CD14-positive monocyte (primary cell): ENCODE measurements at regions of chr5 and their contacts with region 1.

Region 1: GRCh38 chr5:91101600-91102379 is 281.3 kb downstream of the ARRDC3 start:
- DNase-seq: peak; percentile 73 to 94 (median 85)
- H3K4me3 ChIP-seq: no peak overlapping the region
- H3K4me3 Mint-ChIP-seq: no peak overlapping the region
- H3K27ac ChIP-seq: no peak overlapping the region
- H3K27ac Mint-ChIP-seq: peak overlapping the region in 4 of 7 donors; percentile 53 to 80 (median 72)
- H3K4me1 ChIP-seq: peaks cover 17 to 24% of the 10 kb centered on the region in 2 donors
- H3K4me1 Mint-ChIP-seq: peaks cover 22% of the 10 kb centered on the region
- H3K27me3 ChIP-seq: no peaks in the 10 kb centered on the region
- H3K27me3 Mint-ChIP-seq: peaks cover 0 to 2% (median 2%) of the 10 kb centered on the region in 3 donors
- CTCF ChIP-seq: peak; percentile 84

Region 2: DNA sequence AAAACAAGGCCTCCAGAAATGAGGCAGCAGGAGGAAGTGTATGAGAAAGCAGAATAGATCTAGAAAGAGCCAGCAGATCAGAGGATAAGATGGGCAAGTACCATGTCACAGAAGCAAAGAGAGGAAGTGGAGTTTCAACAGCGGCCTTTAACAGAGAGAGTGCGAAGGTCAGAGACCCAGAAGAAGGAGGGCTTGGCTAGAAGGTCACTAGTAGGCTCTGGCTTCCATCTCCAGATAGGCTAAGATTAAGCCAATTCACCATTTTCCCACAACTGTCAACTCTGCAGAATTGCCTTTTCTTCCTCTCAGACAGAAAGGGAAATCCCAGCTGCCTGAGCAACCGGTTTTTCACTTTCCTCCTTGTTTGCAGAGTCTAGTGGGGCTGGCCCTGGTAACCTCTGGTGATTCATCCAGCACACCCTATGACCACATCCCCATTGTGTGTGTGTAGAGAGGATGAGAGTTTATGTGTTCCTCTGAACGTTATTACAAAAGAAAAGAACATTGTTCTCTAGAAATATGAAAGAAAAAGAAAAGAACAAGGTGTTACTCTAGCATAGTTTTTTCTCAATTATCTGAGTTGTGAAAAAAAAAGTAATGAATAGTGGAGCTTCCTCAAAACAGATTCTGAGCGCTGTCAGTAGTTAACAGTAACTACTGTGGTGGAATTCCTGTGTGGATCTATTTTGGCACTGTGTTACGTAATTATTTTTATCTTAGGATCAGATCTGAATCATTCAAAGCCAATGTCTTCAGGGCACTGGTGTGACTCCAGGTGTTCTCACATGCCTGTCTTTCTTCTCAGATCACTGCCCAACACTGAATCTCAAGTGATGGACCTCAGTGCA is 61.0 kb after region 1 on chr5:
- intact Hi-C with region 1: loop called in 1 of 2 experiments (anchors 5 kb)
- DNase-seq: peak; percentile 96 to 99 (median 99)
- H3K4me3 ChIP-seq: peak overlapping the region in 1 of 3 experiments; percentile 54
- H3K4me3 Mint-ChIP-seq: peak overlapping the region in 1 of 2 donors; percentile 75
- H3K27ac ChIP-seq: peak overlapping the region; percentile 91 to 95
- H3K27ac Mint-ChIP-seq: peak overlapping the region; percentile 97 to 100 (median 99)
- H3K4me1 ChIP-seq: peaks cover 29 to 35% of the 10 kb centered on the region in 2 donors
- H3K4me1 Mint-ChIP-seq: peaks cover 32% of the 10 kb centered on the region
- H3K27me3 ChIP-seq: no peaks in the 10 kb centered on the region
- H3K27me3 Mint-ChIP-seq: peaks cover 0 to 4% (median 0%) of the 10 kb centered on the region in 3 donors
- CTCF ChIP-seq: no peak

Region 3: GRCh38 chr5:91219803-91220371 is 118.1 kb after region 1 on chr5:
- intact Hi-C with region 1: loop called in 1 of 2 experiments (anchors 10 kb)
- DNase-seq: peak in 1 of 3 donors; percentile 27
- H3K4me3 ChIP-seq: peak overlapping the region in 1 of 3 experiments; percentile 9
- H3K4me3 Mint-ChIP-seq: no peak overlapping the region
- H3K27ac ChIP-seq: peak overlapping the region in 1 of 2 donors; percentile 91
- H3K27ac Mint-ChIP-seq: peak overlapping the region; percentile 86 to 96 (median 92)
- H3K4me1 ChIP-seq: peaks cover 21 to 30% of the 10 kb centered on the region in 2 donors
- H3K4me1 Mint-ChIP-seq: peaks cover 30% of the 10 kb centered on the region
- H3K27me3 ChIP-seq: no peaks in the 10 kb centered on the region
- H3K27me3 Mint-ChIP-seq: peaks cover 0 to 2% (median 0%) of the 10 kb centered on the region in 3 donors
- CTCF ChIP-seq: no peak

Region 4: DNA sequence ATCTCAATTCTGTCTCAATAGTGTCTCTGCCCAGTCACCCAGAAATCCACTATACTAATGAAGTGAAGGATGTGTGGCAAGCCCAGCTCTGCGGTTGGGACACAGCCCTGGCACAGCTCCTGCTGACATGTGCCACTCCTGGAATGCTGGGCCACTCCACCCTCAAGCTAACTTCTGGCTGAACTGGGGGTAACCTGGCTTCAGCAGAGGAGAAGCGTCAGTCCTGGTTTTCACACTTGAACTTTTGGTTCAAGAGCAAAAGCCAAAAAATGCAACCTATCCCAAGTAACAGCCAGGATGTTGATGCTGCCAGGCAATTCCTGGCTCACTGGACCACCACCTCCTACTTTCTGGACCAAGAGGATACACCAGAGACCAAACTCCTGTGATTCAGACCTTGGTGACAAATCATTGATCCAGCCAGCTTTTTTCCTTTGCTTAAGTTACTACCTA is 194.9 kb after region 1 on chr5:
- intact Hi-C with region 1: loop called in 1 of 2 experiments (anchors 5 kb)
- DNase-seq: peak in 1 of 3 donors; percentile 40
- H3K4me3 ChIP-seq: no peak overlapping the region
- H3K4me3 Mint-ChIP-seq: no peak overlapping the region
- H3K27ac ChIP-seq: no peak overlapping the region
- H3K27ac Mint-ChIP-seq: peak overlapping the region in 3 of 7 donors; percentile 3 to 80 (median 20)
- H3K4me1 ChIP-seq: peaks cover 22 to 30% of the 10 kb centered on the region in 2 donors
- H3K4me1 Mint-ChIP-seq: peaks cover 32% of the 10 kb centered on the region
- H3K27me3 ChIP-seq: no peaks in the 10 kb centered on the region
- H3K27me3 Mint-ChIP-seq: peaks cover 0 to 3% (median 0%) of the 10 kb centered on the region in 3 donors
- CTCF ChIP-seq: no peak

Region 5: DNA sequence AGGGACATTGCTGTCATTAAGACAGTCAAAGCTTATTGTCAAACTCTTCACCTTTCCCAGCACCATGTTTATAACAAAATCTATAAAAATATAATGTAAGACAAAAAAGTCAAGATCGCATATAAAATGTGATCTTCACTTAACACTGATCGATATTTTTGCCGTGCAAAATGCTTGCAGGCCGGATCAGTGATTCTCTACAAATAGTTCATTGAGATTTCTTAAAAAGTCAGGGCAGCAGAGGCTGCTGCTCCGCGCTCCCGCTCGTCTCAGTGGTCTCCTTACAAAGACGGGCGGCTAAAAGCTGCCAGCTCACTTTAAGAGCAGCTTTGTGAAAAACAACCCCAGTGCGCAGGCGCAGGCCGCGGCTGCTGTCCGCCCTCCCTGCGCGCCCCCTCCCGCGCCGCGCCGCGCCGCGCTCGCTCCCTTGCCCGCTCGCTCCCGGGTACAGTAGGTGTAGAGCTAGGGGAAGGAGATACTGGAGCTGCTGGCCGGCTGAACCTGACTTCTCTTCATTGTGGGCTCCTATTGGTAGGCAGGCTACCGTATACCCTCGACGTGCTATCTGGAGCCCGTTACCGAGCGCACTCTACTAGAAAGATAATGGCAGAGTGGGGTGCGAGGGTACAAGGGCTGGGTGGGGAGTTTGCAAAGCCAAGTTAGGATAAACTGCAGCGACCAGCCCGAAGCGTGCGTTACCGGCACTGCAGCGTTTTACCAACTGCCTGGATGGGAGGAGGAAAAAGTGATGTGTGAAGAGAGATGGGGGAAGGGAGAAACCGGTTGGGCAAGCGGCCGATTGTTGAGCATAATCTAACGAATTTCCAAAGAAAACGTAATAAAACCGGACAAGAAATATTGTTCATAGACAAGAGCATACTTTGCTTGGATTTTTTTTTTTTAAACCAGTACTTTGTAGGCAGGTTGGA is 281.5 kb after region 1 on chr5 and contains the start of gene ARRDC3:
- intact Hi-C with region 1: loop called (anchors 2 to 5 kb)
- DNase-seq: peak; percentile 92 to 96 (median 93)
- H3K4me3 ChIP-seq: peak within 1 kb of the TSS; percentile 88 to 100 (median 98)
- H3K4me3 Mint-ChIP-seq: peak within 1 kb of the TSS; percentile 97 to 98
- H3K27ac ChIP-seq: peak within 1 kb of the TSS; percentile 99 to 100
- H3K27ac Mint-ChIP-seq: peak within 1 kb of the TSS; percentile 88 to 99 (median 97)
- H3K4me1 ChIP-seq: peaks cover 20 to 25% of the 10 kb centered on the region in 2 donors
- H3K4me1 Mint-ChIP-seq: peaks cover 15% of the 10 kb centered on the region
- H3K27me3 ChIP-seq: no peaks in the 10 kb centered on the region
- H3K27me3 Mint-ChIP-seq: no peaks in the 10 kb centered on the region
- CTCF ChIP-seq: no peak
- polyA plus RNA-seq, gene ARRDC3: 43.3 to 68.0 (median 64.6) TPM

Region 6: GRCh38 chr5:91419571-91420537 is 318.1 kb after region 1 on chr5:
- intact Hi-C with region 1: loop called in 1 of 2 experiments (anchors 5 kb)
- DNase-seq: peak; percentile 55 to 74 (median 61)
- H3K4me3 ChIP-seq: no peak overlapping the region
- H3K4me3 Mint-ChIP-seq: no peak overlapping the region
- H3K27ac ChIP-seq: no peak overlapping the region
- H3K27ac Mint-ChIP-seq: no peak overlapping the region
- H3K4me1 ChIP-seq: peaks cover 0 to 5% of the 10 kb centered on the region in 2 donors
- H3K4me1 Mint-ChIP-seq: peaks cover 6% of the 10 kb centered on the region
- H3K27me3 ChIP-seq: no peaks in the 10 kb centered on the region
- H3K27me3 Mint-ChIP-seq: peaks cover 0 to 3% (median 1%) of the 10 kb centered on the region in 3 donors
- CTCF ChIP-seq: peak; percentile 79

Region 7: DNA sequence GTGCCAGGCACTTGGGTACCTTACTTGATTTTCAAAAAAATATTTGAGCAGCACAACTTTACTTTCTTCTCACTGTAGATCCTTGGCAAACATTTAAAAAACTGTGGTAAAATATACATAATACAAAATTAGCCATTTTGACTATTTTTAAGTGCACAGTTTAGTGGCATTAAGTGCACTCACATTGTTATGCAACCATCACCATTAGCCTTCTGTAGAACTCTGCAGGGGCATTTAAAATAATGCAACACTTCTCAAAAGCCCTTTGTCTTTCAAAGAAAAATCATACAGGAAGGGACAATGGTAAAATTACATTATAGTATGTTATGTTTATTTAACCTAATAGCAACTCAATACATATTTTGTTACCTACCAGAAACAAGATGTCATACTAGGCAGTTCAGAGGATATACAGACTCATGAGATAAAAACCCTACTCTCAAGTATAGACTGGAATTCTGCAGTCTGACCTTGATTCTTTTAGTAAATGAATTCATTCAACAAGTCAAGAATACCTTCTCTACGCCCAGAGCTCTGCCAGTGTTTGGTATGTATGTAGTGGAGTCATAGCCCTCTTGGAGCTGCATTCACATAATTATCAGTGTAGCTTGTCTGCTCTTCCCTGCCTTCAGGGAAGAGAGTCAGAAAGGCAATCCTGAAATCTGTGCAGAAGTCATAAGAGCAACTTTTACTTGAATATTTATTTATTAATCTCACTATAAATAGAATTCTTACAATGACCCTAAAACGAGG is 355.3 kb after region 1 on chr5:
- intact Hi-C with region 1: no loop called
- DNase-seq: no peak
- H3K4me3 ChIP-seq: no peak overlapping the region
- H3K4me3 Mint-ChIP-seq: no peak overlapping the region
- H3K27ac ChIP-seq: no peak overlapping the region
- H3K27ac Mint-ChIP-seq: no peak overlapping the region
- H3K4me1 ChIP-seq: no peaks in the 10 kb centered on the region
- H3K4me1 Mint-ChIP-seq: no peaks in the 10 kb centered on the region
- H3K27me3 ChIP-seq: no peaks in the 10 kb centered on the region
- H3K27me3 Mint-ChIP-seq: peaks cover 0 to 2% (median 0%) of the 10 kb centered on the region in 3 donors
- CTCF ChIP-seq: no peak